Posterior vena cava (tissue), 2 donors: ENCODE measurements at regions of chr1 and their contacts with region 1.

Region 1: GRCh38 chr1:229579059-229579673 is 20.7 kb upstream of the ABCB10 start:
- DNase-seq: no peak

Region 2: DNA sequence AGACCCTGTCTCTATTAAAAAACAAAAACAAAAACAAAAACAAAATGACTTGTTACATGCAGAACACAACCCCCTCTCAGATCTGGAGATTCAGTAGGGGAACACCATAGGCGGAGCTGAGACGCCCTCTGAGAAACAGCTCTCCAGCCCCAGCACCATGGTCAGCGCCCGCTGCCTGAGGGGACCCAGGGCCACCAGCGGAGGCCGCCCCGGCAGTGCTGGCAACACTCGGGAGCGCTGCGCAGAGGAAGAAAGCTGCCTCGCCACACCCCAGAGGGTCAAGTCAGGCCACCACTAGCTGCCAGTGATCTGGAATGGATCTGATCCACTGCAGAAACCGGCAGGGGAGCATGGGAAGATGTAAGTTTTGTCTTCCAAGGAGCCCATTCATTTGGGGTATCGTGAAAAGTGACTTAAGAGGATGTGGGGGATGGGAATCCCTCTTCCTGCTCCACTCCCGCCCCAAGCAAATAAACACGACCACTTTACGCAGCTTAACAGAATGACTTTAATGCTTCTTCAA is 148.3 kb before region 1 on chr1:
- intact Hi-C with region 1: no loop called
- DNase-seq: no peak

Region 3: DNA sequence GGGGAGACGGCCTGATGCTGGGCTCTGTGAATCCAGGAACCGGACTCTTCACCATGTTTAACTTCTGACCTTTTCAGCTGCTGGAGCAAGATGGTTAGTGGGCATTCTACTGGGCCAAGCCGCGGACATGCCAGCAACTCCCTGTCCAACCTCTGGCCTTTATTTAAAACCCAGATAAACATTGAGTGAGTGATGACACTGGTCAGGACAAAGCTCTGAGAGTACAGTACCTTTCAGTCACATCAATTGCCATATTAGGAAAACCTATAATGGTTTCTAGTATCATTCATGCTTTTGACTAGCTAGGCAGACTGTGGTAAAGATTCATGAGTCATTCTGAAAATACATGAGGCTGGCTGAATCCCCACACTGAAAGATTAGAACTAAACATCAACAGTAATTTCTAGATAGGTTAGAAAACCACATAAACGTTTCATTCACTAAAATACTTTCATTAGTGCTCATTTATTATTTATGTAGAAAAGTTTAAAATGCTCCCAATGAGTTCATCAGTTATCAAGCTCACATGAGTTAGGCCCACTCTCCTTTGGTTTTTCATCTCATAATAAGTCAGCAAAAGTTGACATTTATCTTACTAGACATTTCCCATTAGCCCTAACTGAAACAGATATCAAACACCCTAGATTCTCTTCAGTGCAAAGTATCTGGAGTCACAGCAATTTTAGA is 138.2 kb before region 1 on chr1:
- intact Hi-C with region 1: no loop called
- DNase-seq: no peak

Region 4: DNA sequence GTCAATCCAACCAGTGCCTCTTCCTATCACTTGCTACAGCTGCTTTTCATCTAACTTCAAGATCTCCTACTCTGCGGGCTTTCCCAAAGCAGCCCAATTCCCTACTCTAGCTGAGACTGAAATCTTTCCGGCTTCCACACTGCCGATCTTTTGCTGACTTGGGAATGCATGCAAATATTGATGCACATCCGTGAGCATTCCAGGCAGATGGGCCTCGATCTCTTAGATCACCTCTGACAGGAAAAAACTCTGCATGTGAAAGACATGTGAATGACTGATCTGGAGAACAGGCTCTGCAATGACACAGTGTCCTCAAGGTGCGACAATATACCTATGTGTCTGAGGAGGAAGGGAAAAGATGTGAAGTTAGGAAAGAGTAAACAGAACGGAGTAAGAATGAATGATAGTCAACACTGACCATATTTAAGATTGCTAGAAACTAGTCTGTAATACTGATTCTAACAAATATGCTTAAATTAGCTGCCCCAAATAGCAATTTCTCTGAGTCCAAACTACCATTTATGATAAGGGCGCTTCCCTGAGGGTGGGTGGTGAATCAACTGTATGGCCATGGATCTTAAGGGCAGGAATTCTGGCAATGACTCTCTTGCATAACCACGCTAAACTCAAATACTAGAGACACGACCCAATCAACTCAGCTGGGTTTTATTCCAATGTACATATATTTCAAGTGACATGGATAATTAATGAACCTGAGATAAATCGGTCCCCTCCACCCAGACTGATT is 38.4 kb after region 1 on chr1:
- intact Hi-C with region 1: loop called in 1 of 2 experiments (anchors 1 kb)
- DNase-seq: no peak